ENCODE measurements at regions of chr3 and their contacts with region 1.

Region 1: DNA sequence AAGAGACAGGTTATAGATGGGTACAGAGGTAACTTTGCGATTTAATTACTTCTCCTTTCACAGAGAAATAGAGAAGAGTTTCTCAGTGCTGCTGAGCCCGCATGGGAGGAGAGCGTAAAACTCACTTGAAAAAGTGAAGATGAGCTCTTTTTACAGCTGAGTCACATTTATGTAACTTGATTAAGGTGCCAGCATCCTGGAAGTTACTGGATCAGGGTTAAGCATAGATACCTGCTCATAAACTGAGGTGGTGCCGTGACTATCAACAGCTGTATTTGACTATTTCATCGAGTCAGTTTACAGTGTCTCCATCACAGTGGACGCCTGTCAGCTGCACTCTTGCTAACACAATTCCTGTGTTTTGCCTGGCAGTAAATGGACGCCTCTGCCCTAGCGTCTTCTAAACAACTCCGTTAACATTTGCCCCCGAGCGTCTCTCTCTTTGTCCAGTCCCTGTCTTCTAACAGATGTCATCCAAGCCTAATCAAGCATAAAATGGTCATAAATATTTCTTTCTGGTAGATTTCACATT is 414.6 kb downstream of the FOXP1 start:
- DNase-seq: no peak
- H3K4me3 ChIP-seq: peak overlapping the region in 1 of 2 donors; percentile 14
- H3K27ac ChIP-seq: peak overlapping the region; percentile 71 to 80
- H3K4me1 ChIP-seq: peaks cover 0 to 93% (median 40%) of the 10 kb centered on the region in 4 donors
- H3K27me3 ChIP-seq: no peaks in the 10 kb centered on the region
- CTCF ChIP-seq: no peak

Region 2: GRCh38 chr3:71142440-71143161 is 26.3 kb before region 1 on chr3:
- intact Hi-C with region 1: no loop called
- DNase-seq: no peak
- H3K4me3 ChIP-seq: no peak overlapping the region
- H3K27ac ChIP-seq: peak overlapping the region in 1 of 2 donors; percentile 46
- H3K4me1 ChIP-seq: peaks cover 0 to 34% (median 11%) of the 10 kb centered on the region in 4 donors
- H3K27me3 ChIP-seq: no peaks in the 10 kb centered on the region
- CTCF ChIP-seq: no peak

Region 3: GRCh38 chr3:71247221-71247976 is 78.5 kb after region 1 on chr3:
- intact Hi-C with region 1: loop called (anchors 10 kb)
- DNase-seq: no peak
- H3K4me3 ChIP-seq: no peak overlapping the region
- H3K27ac ChIP-seq: peak overlapping the region; percentile 80 to 86
- H3K4me1 ChIP-seq: peaks cover 0 to 49% (median 30%) of the 10 kb centered on the region in 4 donors
- H3K27me3 ChIP-seq: no peaks in the 10 kb centered on the region
- CTCF ChIP-seq: no peak